H1 (cell line): ENCODE measurements at regions of chr10 and their contacts with region 1.

Region 1: DNA sequence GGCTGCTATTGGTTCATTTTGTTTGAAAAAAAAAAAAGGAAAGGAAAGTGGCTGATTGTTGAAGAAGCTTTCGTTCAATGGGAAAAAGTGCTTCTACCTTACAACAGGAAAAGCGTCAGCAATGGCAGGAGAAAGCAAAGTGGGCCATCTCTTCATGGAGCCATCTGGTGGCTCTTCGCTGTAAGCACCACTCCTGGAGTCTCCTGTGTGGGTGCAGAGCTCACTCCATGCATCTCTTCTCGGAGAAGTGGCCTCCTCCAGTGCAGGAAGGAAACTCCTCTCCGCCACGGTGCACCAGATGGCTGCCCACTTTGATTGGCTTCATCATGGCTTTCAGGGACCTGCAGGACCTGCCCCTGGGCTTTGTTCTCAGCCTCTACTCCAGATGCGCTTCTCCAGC is 250.9 kb downstream of the PTEN start:
- DNase-seq: no peak
- H3K4me3 ChIP-seq: no peak overlapping the region
- H3K27ac ChIP-seq: no peak overlapping the region
- H3K4me1 ChIP-seq: no peaks in the 10 kb centered on the region; a peak in 2 of 7 replicates
- H3K27me3 ChIP-seq: no peaks in the 10 kb centered on the region
- CTCF ChIP-seq: peak; percentile 61 to 82 (median 69)
- EP300 ChIP-seq: no peak
- POLR2A ChIP-seq: no peak
- RAD21 ChIP-seq: peak; percentile 66 to 75

Region 2: GRCh38 chr10:87850742-87851205 is 263.6 kb before region 1 on chr10:
- CTCF ChIA-PET with region 1: interaction called, 11 read pairs
- POLR2A ChIA-PET with region 1: no interaction called
- DNase-seq: no peak
- H3K4me3 ChIP-seq: no peak overlapping the region
- H3K27ac ChIP-seq: no peak overlapping the region
- H3K4me1 ChIP-seq: no peaks in the 10 kb centered on the region
- H3K27me3 ChIP-seq: no peaks in the 10 kb centered on the region
- CTCF ChIP-seq: peak; percentile 62 to 88 (median 72)
- EP300 ChIP-seq: no peak
- POLR2A ChIP-seq: no peak
- RAD21 ChIP-seq: peak; percentile 91

Region 3: GRCh38 chr10:87913156-87913921 is 201.0 kb before region 1 on chr10:
- CTCF ChIA-PET with region 1: no interaction called
- POLR2A ChIA-PET with region 1: no interaction called
- DNase-seq: no peak
- H3K4me3 ChIP-seq: no peak overlapping the region
- H3K27ac ChIP-seq: no peak overlapping the region
- H3K4me1 ChIP-seq: peaks cover 0 to 5% (median 0%) of the 10 kb centered on the region in 4 experiments; a peak in 3 of 7 replicates
- H3K27me3 ChIP-seq: no peaks in the 10 kb centered on the region
- CTCF ChIP-seq: no peak
- EP300 ChIP-seq: no peak
- POLR2A ChIP-seq: no peak
- RAD21 ChIP-seq: no peak

Region 4: DNA sequence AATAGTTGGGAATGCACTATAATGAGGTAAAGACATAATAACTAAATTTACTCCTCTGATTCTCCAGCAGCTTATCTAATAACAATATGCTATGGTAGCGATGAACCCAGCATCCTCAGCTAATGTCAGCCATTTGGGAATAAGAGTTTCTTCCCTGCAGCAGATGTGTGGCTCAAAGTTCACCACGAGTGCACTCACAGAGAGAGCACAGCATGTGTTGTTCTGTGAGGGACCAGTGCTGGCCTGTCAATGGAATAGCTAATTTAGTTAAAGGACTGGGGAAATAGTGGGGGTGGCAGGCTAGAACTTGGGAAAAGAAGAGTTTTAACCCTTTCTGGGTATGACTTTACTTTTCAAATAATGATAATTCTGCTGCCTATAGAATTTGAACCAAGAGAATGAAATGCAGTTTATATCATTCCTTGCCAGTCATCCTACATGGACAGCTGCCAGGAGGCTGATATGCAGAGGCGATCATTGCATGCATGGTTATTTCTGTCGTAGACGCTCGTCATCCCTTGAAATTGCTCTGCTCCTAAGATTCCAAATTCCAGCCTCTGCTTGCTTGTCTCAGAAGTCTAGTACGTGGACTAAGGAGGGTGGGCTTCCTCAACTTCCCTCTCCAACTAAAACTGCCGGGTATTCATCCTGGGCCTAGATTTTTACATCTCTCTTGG is 113.1 kb after region 1 on chr10:
- CTCF ChIA-PET with region 1: no interaction called
- POLR2A ChIA-PET with region 1: no interaction called
- DNase-seq: no peak
- H3K4me3 ChIP-seq: no peak overlapping the region
- H3K27ac ChIP-seq: no peak overlapping the region
- H3K4me1 ChIP-seq: no peaks in the 10 kb centered on the region; a peak in 1 of 7 replicates
- H3K27me3 ChIP-seq: no peaks in the 10 kb centered on the region; a peak in 1 of 7 replicates
- CTCF ChIP-seq: no peak
- EP300 ChIP-seq: no peak
- POLR2A ChIP-seq: no peak
- RAD21 ChIP-seq: no peak